Activated CD8-positive, alpha-beta memory T cell treated with anti-CD3 and anti-CD28 coated beads, Interleukin-2, amount 10 ng/mL, durations not matched to agents 7 days and 5 days (primary cell): ENCODE measurements at regions of chr5 and their contacts with region 1.

Region 1: GRCh38 chr5:139787568-139788293 is 7.9 kb upstream of the PSD2 start:
- DNase-seq: peak; percentile 86
- ATAC-seq: peak; percentile 89
- H3K4me3 Mint-ChIP-seq: peak overlapping the region; percentile 71
- H3K27ac Mint-ChIP-seq: no peak overlapping the region
- H3K4me1 Mint-ChIP-seq: peaks cover 4% of the 10 kb centered on the region
- H3K27me3 Mint-ChIP-seq: peaks cover 29% of the 10 kb centered on the region

Region 2: DNA sequence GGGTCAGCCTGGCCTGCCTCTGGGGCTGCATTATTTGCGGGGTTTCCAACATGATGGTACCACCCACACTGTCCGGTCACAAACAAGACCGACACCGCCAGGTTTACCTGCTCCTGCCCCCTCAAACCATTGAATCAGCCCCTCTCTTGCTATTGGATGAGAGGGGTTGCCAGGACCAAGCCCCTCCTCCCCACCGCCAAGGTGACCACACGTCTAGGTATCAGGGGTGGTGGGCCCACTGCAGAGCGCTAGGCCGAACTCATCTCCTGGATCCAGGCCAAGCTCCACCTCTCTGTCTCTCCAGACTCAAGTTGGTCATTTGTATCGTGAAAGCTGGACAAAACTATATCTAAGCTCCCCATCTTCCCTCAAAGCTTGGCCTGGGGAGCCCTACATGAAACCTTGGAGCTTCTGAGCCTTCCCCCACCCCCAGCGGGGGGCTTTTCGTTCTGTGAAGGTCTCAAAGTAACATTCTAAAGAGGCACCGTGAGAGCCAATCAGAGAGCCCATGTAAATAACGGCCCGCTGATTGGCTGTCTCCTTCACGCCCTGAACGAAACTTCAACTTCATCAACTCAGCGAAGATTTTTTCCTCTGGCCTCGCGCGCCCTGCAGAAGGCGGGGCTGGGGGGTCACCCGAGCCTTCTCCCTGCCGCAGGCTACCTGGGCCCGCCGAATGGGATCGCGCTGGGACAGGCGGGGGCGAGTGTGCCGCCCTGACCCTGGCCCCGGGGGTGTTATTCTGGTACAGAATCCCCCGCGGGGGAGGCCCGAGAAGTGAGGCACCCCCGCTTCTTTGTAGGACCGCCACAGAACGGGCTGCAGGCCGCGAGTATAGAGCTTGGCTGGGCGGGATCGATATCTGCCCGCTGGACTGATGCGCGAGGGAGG is 41.7 kb before region 1 on chr5:
- CTCF ChIA-PET with region 1: interaction called, 12 read pairs
- DNase-seq: no peak
- ATAC-seq: peak; percentile 43
- H3K4me3 Mint-ChIP-seq: peak overlapping the region; percentile 64
- H3K27ac Mint-ChIP-seq: no peak overlapping the region
- H3K4me1 Mint-ChIP-seq: peaks cover 17% of the 10 kb centered on the region
- H3K27me3 Mint-ChIP-seq: peaks cover 36% of the 10 kb centered on the region

Region 3: GRCh38 chr5:139774980-139775661 is 12.6 kb before region 1 on chr5:
- CTCF ChIA-PET with region 1: interaction called, 88 read pairs
- DNase-seq: peak; percentile 85
- ATAC-seq: peak; percentile 95
- H3K4me3 Mint-ChIP-seq: no peak overlapping the region
- H3K27ac Mint-ChIP-seq: no peak overlapping the region
- H3K4me1 Mint-ChIP-seq: peaks cover 5% of the 10 kb centered on the region
- H3K27me3 Mint-ChIP-seq: peaks cover 13% of the 10 kb centered on the region

Region 4: DNA sequence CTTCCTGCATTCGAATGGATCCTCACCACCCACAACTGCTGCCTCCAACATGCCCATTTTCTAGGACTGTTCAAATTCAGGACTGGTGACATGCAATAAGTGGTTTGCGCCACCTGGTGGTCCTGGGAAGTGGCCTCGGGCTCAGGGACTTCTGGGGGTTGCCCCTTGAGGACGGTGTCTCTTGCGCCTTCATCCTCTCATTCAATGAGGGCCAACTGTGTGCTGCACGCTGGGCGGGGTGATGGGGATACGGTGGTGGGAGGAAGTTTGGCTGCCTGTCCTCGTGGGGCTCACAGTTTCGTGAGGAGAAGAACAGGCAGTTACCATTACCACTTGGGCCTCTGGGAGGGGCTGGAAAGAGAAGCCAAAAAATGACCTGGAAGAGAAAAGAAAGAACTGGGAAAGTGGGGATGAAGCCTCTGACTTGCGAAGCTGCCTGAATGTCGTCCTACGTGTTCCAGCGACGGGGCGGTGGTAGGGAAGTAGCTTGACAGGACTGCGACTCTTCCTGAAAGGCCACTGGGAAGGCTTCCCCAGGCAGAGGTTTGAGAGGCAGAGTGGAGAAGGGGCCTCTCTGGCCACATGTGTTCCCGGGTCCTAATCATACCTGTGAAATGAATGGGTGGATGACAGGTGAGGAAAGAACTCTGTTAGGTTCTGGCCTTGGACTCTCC is 56.9 kb after region 1 on chr5:
- CTCF ChIA-PET with region 1: interaction called, 58 read pairs
- DNase-seq: peak; percentile 85
- ATAC-seq: peak; percentile 27
- H3K4me3 Mint-ChIP-seq: no peak overlapping the region
- H3K27ac Mint-ChIP-seq: no peak overlapping the region
- H3K4me1 Mint-ChIP-seq: peaks cover 4% of the 10 kb centered on the region
- H3K27me3 Mint-ChIP-seq: peaks cover 51% of the 10 kb centered on the region

Region 5: GRCh38 chr5:139856714-139857113 is 69.0 kb after region 1 on chr5:
- CTCF ChIA-PET with region 1: interaction called, 63 read pairs
- DNase-seq: no peak
- ATAC-seq: no peak
- H3K4me3 Mint-ChIP-seq: no peak overlapping the region
- H3K27ac Mint-ChIP-seq: no peak overlapping the region
- H3K4me1 Mint-ChIP-seq: no peaks in the 10 kb centered on the region
- H3K27me3 Mint-ChIP-seq: no peaks in the 10 kb centered on the region

Region 6: GRCh38 chr5:139863855-139864558 is 76.3 kb after region 1 on chr5:
- CTCF ChIA-PET with region 1: interaction called, 63 read pairs
- DNase-seq: peak; percentile 71
- ATAC-seq: peak; percentile 67
- H3K4me3 Mint-ChIP-seq: no peak overlapping the region
- H3K27ac Mint-ChIP-seq: no peak overlapping the region
- H3K4me1 Mint-ChIP-seq: no peaks in the 10 kb centered on the region
- H3K27me3 Mint-ChIP-seq: peaks cover 15% of the 10 kb centered on the region